ENCODE measurements at regions of chr3 and their contacts with region 1.

Region 1: GRCh38 chr3:146326670-146327543 is 76.0 kb upstream of the PLSCR4 start:
- H3K4me3 ChIP-seq: no peak overlapping the region
- H3K27ac ChIP-seq: no peak overlapping the region
- H3K4me1 ChIP-seq: no peaks in the 10 kb centered on the region
- CTCF ChIP-seq: peak; percentile 25; the same call in 1 of the 2 replicates

Region 2: GRCh38 chr3:146065573-146066006 is 261.3 kb before region 1 on chr3:
- CTCF ChIA-PET with region 1: interaction called, 11 read pairs
- POLR2A ChIA-PET with region 1: no interaction called
- H3K4me3 ChIP-seq: no peak overlapping the region
- H3K27ac ChIP-seq: no peak overlapping the region
- H3K4me1 ChIP-seq: no peaks in the 10 kb centered on the region
- CTCF ChIP-seq: no peak

Region 3: DNA sequence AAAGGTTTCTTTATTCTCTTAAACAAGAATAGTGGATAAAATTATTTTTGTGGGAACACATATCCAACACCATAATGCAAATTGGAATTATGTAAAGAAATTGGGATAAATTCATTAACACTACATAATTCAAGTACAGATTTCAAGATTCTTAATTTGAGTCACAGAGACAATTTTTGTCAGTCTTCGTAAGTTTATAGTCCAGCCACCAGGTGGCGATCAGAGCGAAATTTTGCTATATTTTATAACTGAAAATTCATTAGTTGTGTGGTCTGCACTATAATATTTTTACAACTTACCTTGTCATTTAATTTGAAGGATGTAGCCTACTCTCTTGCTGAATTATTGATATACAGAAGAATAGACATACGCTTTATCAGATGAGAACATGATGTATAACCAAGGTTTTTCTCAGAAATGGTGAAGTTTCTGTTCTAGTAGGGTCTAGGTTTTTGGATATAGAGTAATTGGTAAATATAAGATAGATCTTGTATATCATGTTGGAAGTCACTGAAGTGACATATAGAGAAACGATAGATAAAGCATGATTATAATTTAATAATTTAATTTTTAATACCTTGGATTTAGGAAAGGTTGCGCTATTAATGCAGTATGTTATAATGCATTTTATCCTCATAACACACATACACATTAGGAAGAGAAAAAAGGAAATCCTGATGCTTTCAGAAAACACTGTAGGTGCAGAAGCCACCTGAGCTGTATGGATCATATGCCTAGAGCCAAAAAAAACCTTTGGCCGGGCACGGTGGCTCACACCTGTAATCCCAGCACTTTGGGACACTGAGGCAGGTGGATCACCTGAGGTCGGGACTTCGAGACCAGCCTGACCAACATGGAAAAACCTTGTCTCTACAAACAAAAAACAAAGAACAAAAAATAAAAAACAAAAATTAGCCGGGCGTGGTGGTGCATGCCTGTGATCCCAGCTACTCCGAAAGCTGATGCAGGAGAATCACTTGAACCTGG is 107.7 kb before region 1 on chr3:
- CTCF ChIA-PET with region 1: interaction called, 11 read pairs
- POLR2A ChIA-PET with region 1: no interaction called
- H3K4me3 ChIP-seq: no peak overlapping the region
- H3K27ac ChIP-seq: no peak overlapping the region
- H3K4me1 ChIP-seq: no peaks in the 10 kb centered on the region
- CTCF ChIP-seq: no peak

Region 4: GRCh38 chr3:146313411-146314111 is 13.3 kb before region 1 on chr3:
- CTCF ChIA-PET with region 1: interaction called, 11 read pairs
- POLR2A ChIA-PET with region 1: no interaction called
- H3K4me3 ChIP-seq: no peak overlapping the region
- H3K27ac ChIP-seq: no peak overlapping the region
- H3K4me1 ChIP-seq: no peaks in the 10 kb centered on the region
- CTCF ChIP-seq: no peak